ENCODE measurements at regions of chr6 and their contacts with region 1.

Region 1: DNA sequence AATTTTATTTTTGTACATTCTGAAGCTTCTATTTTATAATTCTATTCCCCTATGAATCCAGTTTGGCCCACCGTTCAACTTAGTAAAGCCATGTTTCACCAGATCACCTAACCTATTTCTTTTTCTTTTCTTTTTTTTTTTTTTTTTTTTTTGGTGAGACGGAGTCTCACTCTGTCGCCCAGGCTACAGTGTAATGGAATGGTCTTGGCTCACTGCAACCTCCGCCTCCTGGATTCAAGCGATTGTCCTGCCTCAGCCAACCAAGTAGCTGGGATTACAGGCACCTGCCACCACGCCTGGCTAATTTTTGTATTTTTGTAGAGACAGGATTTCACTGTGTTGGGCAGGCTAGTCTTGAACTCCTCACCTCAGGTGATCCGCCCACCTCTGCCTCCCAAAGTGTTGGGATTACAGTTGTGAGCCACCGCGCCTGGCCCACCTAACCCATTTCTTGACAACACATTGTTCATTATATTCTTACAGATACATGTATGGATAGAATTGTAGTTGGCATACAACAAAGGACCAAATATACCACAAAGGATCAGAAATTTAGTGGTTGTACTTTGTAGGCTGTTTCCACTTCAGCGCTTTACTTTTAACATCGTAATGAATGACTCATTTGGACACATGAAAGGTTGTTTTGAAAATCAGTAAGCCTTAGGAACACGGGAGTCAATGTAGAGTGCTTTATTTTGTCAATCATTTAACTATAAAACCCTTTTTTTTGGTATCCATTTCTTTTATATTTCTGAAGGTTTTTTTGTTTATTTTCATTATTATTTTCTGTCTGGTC is 63.2 kb downstream of the GJA1 start:
- DNase-seq: no peak
- H3K4me3 ChIP-seq: no peak overlapping the region
- H3K27ac ChIP-seq: peak overlapping the region; percentile 47 to 72
- H3K4me1 ChIP-seq: no peaks in the 10 kb centered on the region
- H3K27me3 ChIP-seq: no peaks in the 10 kb centered on the region
- CTCF ChIP-seq: no peak
- POLR2A ChIP-seq: no peak

Region 2: DNA sequence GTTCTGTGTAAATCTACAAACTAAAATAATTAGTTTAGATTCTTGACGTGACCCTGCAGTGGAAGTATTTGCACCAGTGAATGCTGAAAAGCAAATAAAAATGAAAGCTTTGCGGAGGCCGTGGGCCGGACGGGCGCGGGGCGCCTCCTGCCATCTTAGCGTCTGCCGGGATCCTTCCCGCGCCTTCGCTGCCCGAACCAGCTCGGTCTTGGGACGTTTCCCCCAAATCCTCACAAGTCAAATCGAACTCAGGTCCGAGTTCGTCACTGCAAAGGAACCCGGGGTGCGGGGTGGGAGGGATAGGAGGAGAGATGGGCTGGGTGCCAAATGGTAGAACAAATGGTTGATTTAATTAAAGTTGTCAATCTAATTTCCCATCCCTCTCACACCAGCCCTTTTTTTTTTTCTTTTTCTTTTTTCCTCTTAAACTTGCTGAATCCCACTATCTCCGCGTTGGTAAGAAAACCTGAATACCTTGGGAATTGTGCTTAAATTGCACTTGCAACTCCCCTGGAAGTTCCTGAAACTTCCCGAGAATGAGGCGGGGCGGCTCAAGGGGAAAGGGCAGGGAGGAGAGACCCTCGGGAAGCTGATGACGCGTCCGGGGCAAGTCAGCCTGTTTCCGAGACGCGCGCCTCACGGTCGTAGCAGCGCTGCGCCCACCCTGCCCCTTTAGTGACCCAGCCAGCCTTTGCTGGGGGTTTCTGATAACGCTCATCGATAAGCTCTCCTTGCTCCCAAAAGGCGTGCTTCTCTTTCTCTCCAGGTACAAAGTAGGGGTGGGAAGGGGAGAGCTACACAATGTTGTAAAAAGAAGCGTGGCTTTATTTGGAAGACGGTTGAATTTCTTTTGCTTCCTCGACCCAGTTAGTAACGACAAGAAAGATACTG is 61.5 kb before region 1 on chr6:
- intact Hi-C with region 1: loop called (anchors 5 kb)
- DNase-seq: peak; percentile 40
- H3K4me3 ChIP-seq: peak overlapping the region; percentile 42 to 47
- H3K27ac ChIP-seq: peak overlapping the region; percentile 79 to 80
- H3K4me1 ChIP-seq: no peaks in the 10 kb centered on the region
- H3K27me3 ChIP-seq: no peaks in the 10 kb centered on the region
- CTCF ChIP-seq: no peak
- POLR2A ChIP-seq: peak; percentile 4

Region 3: DNA sequence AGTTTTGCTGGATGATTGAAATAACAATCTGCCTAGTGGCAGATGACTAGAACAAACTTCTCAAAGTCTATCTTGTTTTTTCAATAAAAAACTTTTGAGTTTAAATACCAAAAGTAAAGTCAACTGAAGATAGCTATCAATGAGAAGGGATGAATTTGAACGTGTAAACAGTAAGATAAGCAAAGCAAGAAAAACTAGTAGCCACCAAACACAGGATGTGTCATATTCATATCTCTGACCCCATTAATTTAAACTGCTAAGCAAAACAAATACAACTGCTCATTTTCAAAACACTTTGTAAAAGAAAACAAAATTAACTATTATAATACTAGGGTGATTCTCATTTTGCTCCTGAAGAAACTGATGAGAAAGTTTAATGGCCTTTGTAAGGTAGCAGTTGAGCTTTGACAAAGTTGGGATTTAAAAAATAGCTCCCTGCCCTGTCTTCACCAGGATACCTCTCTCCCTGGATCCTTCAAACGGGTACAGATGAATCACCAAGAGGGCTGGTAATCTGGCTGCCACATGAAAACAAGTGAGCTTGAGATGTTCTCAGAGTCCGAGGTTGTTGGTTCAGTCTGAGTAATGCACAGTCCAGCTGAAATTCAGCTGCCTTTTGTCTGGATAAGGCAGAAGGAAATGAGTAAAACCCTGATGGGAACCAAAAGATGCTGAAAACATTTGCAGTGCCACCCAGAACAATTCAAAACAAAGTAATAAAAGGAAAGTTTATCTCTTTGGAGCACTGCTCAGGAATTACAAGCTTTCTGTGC is 23.4 kb after region 1 on chr6:
- intact Hi-C with region 1: loop called (anchors 2 kb)
- DNase-seq: peak; percentile 28
- H3K4me3 ChIP-seq: peak overlapping the region in 1 of 2 donors; percentile 5
- H3K27ac ChIP-seq: peak overlapping the region; percentile 26 to 49
- H3K4me1 ChIP-seq: no peaks in the 10 kb centered on the region
- H3K27me3 ChIP-seq: no peaks in the 10 kb centered on the region
- CTCF ChIP-seq: no peak
- POLR2A ChIP-seq: no peak

Region 4: GRCh38 chr6:121694389-121695251 is 195.9 kb after region 1 on chr6:
- intact Hi-C with region 1: loop called (anchors 5 kb)
- DNase-seq: no peak
- H3K4me3 ChIP-seq: no peak overlapping the region
- H3K27ac ChIP-seq: no peak overlapping the region
- H3K4me1 ChIP-seq: no peaks in the 10 kb centered on the region
- H3K27me3 ChIP-seq: no peaks in the 10 kb centered on the region
- CTCF ChIP-seq: no peak
- POLR2A ChIP-seq: no peak

Region 5: DNA sequence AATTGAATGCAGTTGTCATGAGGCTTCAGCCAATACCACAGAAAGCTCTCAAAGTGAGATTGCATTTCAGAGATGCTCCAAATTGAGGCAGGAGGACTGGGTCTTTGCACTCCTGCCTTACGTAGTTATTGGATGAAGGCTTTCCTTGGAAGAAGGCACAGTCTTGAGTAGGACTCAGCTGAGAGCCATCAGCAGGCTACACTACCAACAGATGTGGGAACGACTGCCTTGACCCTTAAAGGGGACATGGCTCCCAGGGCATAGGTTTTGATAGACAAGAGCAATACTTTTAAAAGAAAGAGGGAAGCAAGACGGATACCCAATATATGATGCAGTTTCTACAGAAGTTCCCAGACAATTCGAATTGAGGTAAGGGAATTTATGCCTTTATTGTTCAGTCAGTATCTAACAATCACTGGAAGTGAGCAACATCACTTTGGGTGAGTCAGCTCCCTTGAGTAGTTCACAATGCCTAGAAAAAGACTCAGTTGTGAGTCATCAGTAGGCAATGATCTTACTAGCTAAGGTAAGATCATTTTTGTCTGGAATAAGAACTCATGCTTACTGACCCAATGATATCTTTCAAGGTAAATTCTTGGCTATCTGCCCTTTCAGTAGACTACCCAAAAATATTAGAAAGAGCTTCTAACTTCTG is 327.6 kb after region 1 on chr6:
- intact Hi-C with region 1: no loop called
- DNase-seq: no peak
- H3K4me3 ChIP-seq: no peak overlapping the region
- H3K27ac ChIP-seq: no peak overlapping the region
- H3K4me1 ChIP-seq: no peaks in the 10 kb centered on the region
- H3K27me3 ChIP-seq: no peaks in the 10 kb centered on the region
- CTCF ChIP-seq: no peak
- POLR2A ChIP-seq: no peak

Region 6: GRCh38 chr6:121932076-121932991 is 433.7 kb after region 1 on chr6:
- intact Hi-C with region 1: no loop called
- DNase-seq: no peak
- H3K4me3 ChIP-seq: no peak overlapping the region
- H3K27ac ChIP-seq: peak overlapping the region in 1 of 2 donors; percentile 26
- H3K4me1 ChIP-seq: no peaks in the 10 kb centered on the region
- H3K27me3 ChIP-seq: no peaks in the 10 kb centered on the region
- CTCF ChIP-seq: no peak
- POLR2A ChIP-seq: no peak